Naive thymus-derived CD4-positive, alpha-beta T cell (primary cell): ENCODE measurements at regions of chr7 and their contacts with region 1.

Region 1: DNA sequence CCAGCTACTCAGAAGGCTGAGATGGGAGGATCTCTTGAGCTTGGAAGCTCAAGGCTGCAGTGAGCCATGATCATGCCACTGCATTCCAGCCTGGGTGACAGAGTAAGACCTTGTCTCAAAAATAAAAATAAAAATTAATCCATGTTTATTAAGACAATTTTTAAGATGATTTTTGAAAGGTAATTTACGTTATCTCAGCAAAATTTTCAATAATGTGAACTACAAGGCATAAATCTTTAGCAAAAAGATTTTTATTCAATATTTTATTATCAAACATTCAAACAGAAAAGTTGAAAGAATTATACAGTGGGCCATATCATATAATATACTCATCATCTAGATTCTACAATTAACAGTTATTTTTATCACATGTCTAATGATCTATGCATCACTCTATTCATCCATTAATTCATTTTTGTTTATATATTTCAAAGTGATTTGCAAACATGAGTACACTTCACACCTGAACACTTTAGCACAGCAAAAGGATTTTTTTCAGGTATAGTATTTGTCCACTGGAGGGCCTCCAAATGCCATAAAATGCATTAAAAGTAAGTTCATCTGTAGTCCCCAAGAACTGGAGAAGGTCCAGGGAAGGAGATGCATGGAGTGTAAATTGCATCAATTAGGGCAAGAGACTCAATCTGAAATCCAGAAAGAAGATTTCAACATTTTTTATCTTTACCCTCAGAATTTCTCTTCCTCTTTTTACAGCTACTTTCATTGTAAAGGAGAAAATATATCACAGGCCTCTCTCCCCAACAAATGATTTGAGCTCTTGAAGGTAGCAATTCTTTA is 38.6 kb upstream of the RSBN1L start:
- DNase-seq: peak in 7 of 9 donors; percentile 16 to 54 (median 44)
- ATAC-seq: peak; percentile 69
- H3K4me3 ChIP-seq: no peak overlapping the region
- H3K4me3 Mint-ChIP-seq: no peak overlapping the region
- H3K27ac ChIP-seq: no peak overlapping the region
- H3K27ac Mint-ChIP-seq: no peak overlapping the region
- H3K4me1 ChIP-seq: no peaks in the 10 kb centered on the region
- H3K4me1 Mint-ChIP-seq: no peaks in the 10 kb centered on the region
- H3K27me3 ChIP-seq: no peaks in the 10 kb centered on the region
- H3K27me3 Mint-ChIP-seq: no peaks in the 10 kb centered on the region

Region 2: DNA sequence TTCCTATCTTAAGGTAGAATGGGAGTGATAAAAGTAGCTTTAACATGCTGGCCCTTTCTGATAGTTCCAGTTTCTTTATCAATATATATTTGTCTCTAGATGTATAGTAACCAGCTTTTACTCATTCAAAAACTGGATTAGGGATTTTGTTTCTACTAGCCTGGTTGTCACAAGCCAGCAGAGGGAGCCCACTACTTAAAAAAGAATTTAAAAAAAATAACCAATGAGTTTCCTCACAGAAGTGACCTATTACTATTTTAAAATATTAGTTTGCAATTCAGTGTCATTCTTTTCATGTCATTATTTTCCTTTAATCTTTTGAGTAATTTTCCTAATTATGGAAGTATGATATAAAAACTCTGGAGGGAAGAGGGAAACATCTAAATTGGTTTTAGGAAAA is 283.0 kb after region 1 on chr7:
- CTCF ChIA-PET with region 1: no interaction called
- POLR2A ChIA-PET with region 1: no interaction called
- intact Hi-C with region 1: loop called (anchors 2 kb)
- DNase-seq: no peak
- ATAC-seq: no peak
- H3K4me3 ChIP-seq: no peak overlapping the region
- H3K4me3 Mint-ChIP-seq: no peak overlapping the region
- H3K27ac ChIP-seq: no peak overlapping the region
- H3K27ac Mint-ChIP-seq: no peak overlapping the region
- H3K4me1 ChIP-seq: no peaks in the 10 kb centered on the region
- H3K4me1 Mint-ChIP-seq: peaks cover 8 to 14% (median 9%) of the 10 kb centered on the region in 7 donors
- H3K27me3 ChIP-seq: no peaks in the 10 kb centered on the region
- H3K27me3 Mint-ChIP-seq: no peaks in the 10 kb centered on the region

Region 3: GRCh38 chr7:78558566-78558965 is 900.9 kb after region 1 on chr7:
- CTCF ChIA-PET with region 1: no interaction called
- POLR2A ChIA-PET with region 1: no interaction called
- intact Hi-C with region 1: no loop called
- DNase-seq: no peak
- ATAC-seq: no peak
- H3K4me3 ChIP-seq: no peak overlapping the region
- H3K4me3 Mint-ChIP-seq: no peak overlapping the region
- H3K27ac ChIP-seq: no peak overlapping the region
- H3K27ac Mint-ChIP-seq: no peak overlapping the region
- H3K4me1 ChIP-seq: no peaks in the 10 kb centered on the region
- H3K4me1 Mint-ChIP-seq: no peaks in the 10 kb centered on the region
- H3K27me3 ChIP-seq: no peaks in the 10 kb centered on the region
- H3K27me3 Mint-ChIP-seq: no peaks in the 10 kb centered on the region